ENCODE measurements at regions of chr17 and their contacts with region 1.

Region 1: GRCh38 chr17:38824899-38825761 is at the start of gene CWC25:
- DNase-seq: peak; percentile 86 to 98 (median 93)
- H3K4me3 ChIP-seq: peak within 1 kb of the TSS; percentile 57 to 97 (median 85)
- H3K27ac ChIP-seq: peak within 1 kb of the TSS; percentile 90 to 100 (median 98)
- H3K27me3 ChIP-seq: no peaks in the 10 kb centered on the region
- CTCF ChIP-seq: peak in 19 of 56 donors; percentile 6 to 53 (median 22)
- total RNA-seq, gene CWC25: 12.1 to 25.1 (median 17.5) TPM

Region 2: DNA sequence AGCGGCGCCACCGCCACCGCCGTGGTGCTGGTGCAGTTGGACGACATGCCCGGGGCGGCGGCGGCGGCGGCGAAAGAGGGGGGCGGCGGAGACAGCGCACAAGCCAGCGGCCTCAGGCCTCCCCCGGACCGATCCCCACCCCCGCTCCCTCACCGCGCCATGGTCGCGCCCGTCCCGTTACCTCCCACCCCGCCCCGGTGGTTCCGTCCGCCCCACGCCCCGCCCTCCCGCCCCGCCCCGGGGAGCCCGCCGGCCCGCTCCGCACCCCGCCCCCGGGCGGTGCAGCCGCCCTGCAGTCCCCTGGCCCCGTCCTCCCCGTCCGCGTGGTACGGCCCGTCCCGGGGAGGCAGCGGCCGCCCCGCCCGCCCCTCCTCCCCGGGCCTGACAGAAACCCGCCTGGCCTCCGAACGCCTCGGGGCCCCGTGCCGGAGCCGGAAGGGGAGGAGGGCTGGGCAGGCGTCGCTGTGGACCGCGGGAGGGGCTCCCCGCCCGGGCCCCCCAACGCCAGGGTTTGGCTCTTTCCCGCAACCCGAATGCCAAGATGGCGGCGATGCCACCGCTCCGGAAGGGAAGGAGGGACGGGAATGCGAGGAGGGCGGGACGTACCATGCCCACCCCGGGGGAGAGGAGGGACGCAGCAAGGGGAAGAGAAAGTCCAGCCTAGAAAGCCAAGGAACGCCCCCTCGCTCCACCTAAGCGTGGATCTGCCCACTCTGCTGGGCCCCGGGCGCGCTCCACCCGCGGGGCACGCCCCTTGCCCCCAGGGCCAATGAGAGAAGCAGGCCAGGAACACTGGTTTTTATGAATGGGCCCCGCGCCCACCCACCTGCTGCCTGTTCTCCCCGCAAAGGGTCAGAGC is 25.5 kb before region 1 on chr17 and contains the start of gene PIP4K2B:
- intact Hi-C with region 1: loop called in 1 of 2 experiments (anchors 1 kb)
- DNase-seq: peak; percentile 85 to 98 (median 96)
- H3K4me3 ChIP-seq: peak within 1 kb of the TSS; percentile 74 to 98 (median 91)
- H3K27ac ChIP-seq: peak within 1 kb of the TSS; percentile 91 to 100 (median 100)
- H3K27me3 ChIP-seq: no peaks in the 10 kb centered on the region
- CTCF ChIP-seq: peak in 16 of 56 donors; percentile 2 to 31 (median 19)
- total RNA-seq, gene PIP4K2B: 106 to 220 (median 167) TPM

Region 3: DNA sequence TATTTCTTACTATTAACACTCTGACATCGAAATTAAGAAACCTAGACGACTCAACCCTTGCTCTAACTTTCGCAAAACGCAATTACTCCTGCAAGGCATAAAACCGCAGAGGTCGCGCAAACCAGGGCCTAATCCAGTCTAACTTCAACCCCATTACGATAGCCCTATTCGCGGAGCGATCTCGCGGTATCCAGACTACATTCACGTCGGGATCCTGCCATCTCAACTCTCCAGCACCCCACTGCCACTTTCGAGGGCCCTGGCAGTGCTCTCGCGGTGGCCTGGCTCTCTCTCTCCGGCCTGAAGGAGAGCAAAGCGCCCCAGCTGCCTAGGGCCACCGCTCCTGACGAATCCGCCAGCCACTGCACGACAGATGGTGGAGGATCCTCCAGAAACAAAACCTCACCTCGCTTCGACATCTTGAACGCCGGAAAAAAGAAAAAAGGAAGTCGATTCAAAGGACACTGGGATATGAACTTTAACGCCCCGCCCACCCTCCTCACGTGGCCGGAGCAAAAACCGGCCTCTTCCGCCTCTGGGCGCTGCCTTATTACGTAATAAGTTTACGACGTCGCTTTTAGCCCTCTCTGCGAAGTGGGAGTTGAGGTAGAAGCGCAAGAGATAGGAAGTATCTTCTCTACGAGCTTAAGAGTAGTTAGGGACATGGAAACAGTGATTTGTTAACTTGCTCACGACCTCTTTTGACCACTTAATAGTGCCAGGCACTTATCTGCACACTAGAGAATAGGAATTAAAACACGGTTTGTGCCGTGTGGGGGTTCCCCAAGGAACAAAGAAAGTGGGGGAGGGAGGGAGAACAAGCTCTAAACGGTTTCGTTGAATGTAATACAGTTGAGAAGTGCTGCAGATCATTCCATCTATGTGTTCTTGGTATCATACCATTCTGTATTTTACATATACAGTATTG is 28.4 kb after region 1 on chr17 and contains the start of gene RPL23:
- intact Hi-C with region 1: loop called (anchors 1 to 2 kb)
- DNase-seq: peak; percentile 87 to 95 (median 93)
- H3K4me3 ChIP-seq: peak within 1 kb of the TSS; percentile 45 to 95 (median 77)
- H3K27ac ChIP-seq: peak within 1 kb of the TSS; percentile 65 to 98 (median 93)
- H3K27me3 ChIP-seq: no peaks in the 10 kb centered on the region
- CTCF ChIP-seq: peak in 25 of 56 donors; percentile 8 to 53 (median 24)
- total RNA-seq, gene RPL23: 239 to 571 (median 364) TPM